Sigmoid colon (tissue), 7 donors: ENCODE measurements at regions of chr9 and their contacts with region 1.

Region 1: GRCh38 chr9:27407986-27408385 is 111.0 kb upstream of the EQTN start:
- DNase-seq: no peak
- H3K4me3 ChIP-seq: no peak overlapping the region
- H3K27ac ChIP-seq: no peak overlapping the region
- H3K4me1 ChIP-seq: peaks cover 0 to 13% (median 11%) of the 10 kb centered on the region in 4 donors
- H3K27me3 ChIP-seq: no peaks in the 10 kb centered on the region
- CTCF ChIP-seq: no peak
- EP300 ChIP-seq: no peak
- POLR2A ChIP-seq: no peak

Region 2: GRCh38 chr9:27457445-27457844 is 49.5 kb after region 1 on chr9:
- intact Hi-C with region 1: loop called (anchors 10 kb)
- DNase-seq: no peak
- H3K4me3 ChIP-seq: no peak overlapping the region
- H3K27ac ChIP-seq: no peak overlapping the region
- H3K4me1 ChIP-seq: peaks cover 0 to 19% (median 15%) of the 10 kb centered on the region in 4 donors
- H3K27me3 ChIP-seq: no peaks in the 10 kb centered on the region
- CTCF ChIP-seq: no peak
- EP300 ChIP-seq: no peak
- POLR2A ChIP-seq: no peak

Region 3: DNA sequence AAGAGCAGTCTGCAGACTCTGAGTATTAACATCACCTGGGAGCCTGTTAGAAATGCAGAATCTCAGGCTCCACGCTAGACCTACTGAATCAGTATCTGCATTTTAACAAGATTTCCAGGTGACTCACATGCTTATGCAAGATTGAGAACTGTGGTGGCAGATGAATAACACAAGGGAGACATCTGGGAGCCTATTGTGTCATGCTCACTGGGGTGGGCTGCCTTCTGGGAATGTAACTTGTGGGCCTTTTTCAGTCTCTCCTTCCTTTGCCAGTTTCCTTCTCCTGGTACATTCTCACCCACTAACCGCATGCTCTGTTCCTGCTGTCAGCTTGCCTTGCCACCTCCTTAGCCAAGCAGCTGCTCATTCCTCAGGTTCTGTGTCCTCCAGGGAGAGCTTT is 341.9 kb after region 1 on chr9:
- intact Hi-C with region 1: no loop called
- DNase-seq: no peak
- H3K4me3 ChIP-seq: no peak overlapping the region
- H3K27ac ChIP-seq: no peak overlapping the region
- H3K4me1 ChIP-seq: peaks cover 0 to 4% (median 0%) of the 10 kb centered on the region in 4 donors
- H3K27me3 ChIP-seq: no peaks in the 10 kb centered on the region
- CTCF ChIP-seq: no peak
- EP300 ChIP-seq: no peak
- POLR2A ChIP-seq: no peak